Heart right ventricle (tissue), 16 donors: ENCODE measurements at regions of chr2 and their contacts with region 1.

Region 1: GRCh38 chr2:119223521-119224390 is at the start of gene STEAP3:
- DNase-seq: peak; percentile 75 to 86
- ATAC-seq: peak; percentile 86 to 96 (median 94)
- H3K4me3 ChIP-seq: peak within 1 kb of the TSS; percentile 47 to 89 (median 72)
- H3K27ac ChIP-seq: peak within 1 kb of the TSS in 7 of 10 donors; percentile 32 to 70 (median 45)
- H3K4me1 ChIP-seq: peaks cover 10 to 28% (median 12%) of the 10 kb centered on the region in 9 donors
- H3K27me3 ChIP-seq: peaks cover 0 to 9% (median 0%) of the 10 kb centered on the region in 7 donors
- CTCF ChIP-seq: no peak
- total RNA-seq, gene STEAP3: 5.0 to 18.2 (median 8.6) TPM

Region 2: DNA sequence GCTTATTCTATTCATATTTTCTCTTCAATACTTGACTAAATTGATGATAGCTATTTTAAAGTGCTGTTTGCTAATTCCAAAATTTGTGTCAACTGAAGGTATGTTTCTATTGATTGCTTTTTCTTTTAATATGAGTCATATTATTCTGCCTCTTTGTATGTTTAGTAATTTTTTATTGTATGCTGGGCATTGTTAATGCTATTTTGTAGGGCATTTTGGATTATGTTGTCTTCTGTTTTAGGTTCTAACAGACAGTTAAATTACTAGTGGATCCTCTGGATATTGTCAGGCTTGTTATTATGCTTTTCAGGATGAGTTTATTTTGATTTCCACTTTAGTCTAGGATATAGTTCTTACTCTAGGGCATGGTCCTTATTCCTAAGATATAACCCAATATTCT is 120.8 kb before region 1 on chr2:
- intact Hi-C with region 1: no loop called
- DNase-seq: no peak
- ATAC-seq: no peak
- H3K4me3 ChIP-seq: no peak overlapping the region
- H3K27ac ChIP-seq: no peak overlapping the region
- H3K4me1 ChIP-seq: no peaks in the 10 kb centered on the region
- H3K27me3 ChIP-seq: peaks cover 0 to 4% (median 0%) of the 10 kb centered on the region in 7 donors
- CTCF ChIP-seq: no peak

Region 3: DNA sequence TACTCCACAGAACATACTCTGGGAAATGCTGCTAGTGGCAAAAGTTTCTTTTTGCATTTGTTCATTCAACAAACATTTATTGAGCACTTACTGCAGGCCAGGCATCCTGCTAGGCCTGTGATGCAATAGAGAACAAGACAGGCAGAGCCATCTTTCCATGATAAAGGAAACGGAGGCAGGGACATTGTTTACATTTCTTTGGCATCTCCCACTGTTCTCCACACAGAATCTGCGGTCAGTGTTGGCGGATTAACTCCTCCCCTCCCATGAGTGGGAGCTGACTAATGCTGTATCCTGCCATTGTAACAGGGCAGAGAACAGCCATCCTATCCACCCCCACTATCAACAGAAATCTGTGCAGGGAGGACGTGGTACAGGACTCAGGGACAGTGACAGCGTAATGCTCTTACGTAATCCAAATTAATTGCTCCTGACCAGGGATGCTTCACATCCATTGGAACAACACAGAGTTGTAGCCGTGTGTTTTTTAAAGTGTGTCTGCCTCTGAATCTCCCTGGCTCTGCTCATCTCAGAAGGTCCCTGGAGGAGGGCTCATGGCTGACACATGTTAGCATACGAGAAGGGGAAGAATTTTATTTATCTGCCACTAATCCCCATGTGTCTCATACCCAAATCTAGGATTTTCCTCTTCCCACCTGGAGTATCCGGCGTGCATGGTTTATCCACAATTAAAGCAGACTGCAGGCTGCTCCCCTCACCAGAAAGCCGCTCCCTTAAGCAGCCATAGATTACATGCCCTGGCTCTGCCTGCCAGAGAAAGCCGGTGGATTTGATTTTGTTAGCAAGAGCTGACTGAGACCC is 32.2 kb after region 1 on chr2:
- intact Hi-C with region 1: loop called in 2 of 10 experiments (anchors 5 kb)
- DNase-seq: no peak
- ATAC-seq: peak in 5 of 8 donors; percentile 45 to 75 (median 68)
- H3K4me3 ChIP-seq: no peak overlapping the region
- H3K27ac ChIP-seq: no peak overlapping the region
- H3K4me1 ChIP-seq: peaks cover 0 to 21% (median 0%) of the 10 kb centered on the region in 9 donors
- H3K27me3 ChIP-seq: no peaks in the 10 kb centered on the region
- CTCF ChIP-seq: no peak

Region 4: GRCh38 chr2:119264781-119265692 is 41.3 kb after region 1 on chr2:
- intact Hi-C with region 1: loop called in 2 of 10 experiments (anchors 2 to 5 kb)
- DNase-seq: peak in 1 of 2 donors; percentile 23
- ATAC-seq: peak; percentile 71 to 89 (median 83)
- H3K4me3 ChIP-seq: no peak overlapping the region
- H3K27ac ChIP-seq: no peak overlapping the region
- H3K4me1 ChIP-seq: peaks cover 0 to 13% (median 0%) of the 10 kb centered on the region in 9 donors
- H3K27me3 ChIP-seq: no peaks in the 10 kb centered on the region
- CTCF ChIP-seq: peak; percentile 33 to 76 (median 72)

Region 5: GRCh38 chr2:119283860-119284331 is 60.1 kb after region 1 on chr2:
- intact Hi-C with region 1: loop called in 1 of 10 experiments (anchors 10 kb)
- DNase-seq: peak; percentile 46 to 60
- ATAC-seq: peak; percentile 77 to 91 (median 84)
- H3K4me3 ChIP-seq: no peak overlapping the region
- H3K27ac ChIP-seq: peak overlapping the region in 6 of 10 donors; percentile 9 to 80 (median 23)
- H3K4me1 ChIP-seq: peaks cover 0 to 28% (median 3%) of the 10 kb centered on the region in 9 donors
- H3K27me3 ChIP-seq: no peaks in the 10 kb centered on the region
- CTCF ChIP-seq: no peak

Region 6: GRCh38 chr2:119290859-119291587 is 67.3 kb after region 1 on chr2:
- intact Hi-C with region 1: loop called in 5 of 10 experiments (anchors 1 to 10 kb)
- DNase-seq: peak; percentile 78 to 86
- ATAC-seq: peak; percentile 60 to 90 (median 86)
- H3K4me3 ChIP-seq: no peak overlapping the region
- H3K27ac ChIP-seq: no peak overlapping the region
- H3K4me1 ChIP-seq: peaks cover 0 to 18% (median 3%) of the 10 kb centered on the region in 9 donors
- H3K27me3 ChIP-seq: no peaks in the 10 kb centered on the region
- CTCF ChIP-seq: peak; percentile 19 to 99 (median 91)

Region 7: DNA sequence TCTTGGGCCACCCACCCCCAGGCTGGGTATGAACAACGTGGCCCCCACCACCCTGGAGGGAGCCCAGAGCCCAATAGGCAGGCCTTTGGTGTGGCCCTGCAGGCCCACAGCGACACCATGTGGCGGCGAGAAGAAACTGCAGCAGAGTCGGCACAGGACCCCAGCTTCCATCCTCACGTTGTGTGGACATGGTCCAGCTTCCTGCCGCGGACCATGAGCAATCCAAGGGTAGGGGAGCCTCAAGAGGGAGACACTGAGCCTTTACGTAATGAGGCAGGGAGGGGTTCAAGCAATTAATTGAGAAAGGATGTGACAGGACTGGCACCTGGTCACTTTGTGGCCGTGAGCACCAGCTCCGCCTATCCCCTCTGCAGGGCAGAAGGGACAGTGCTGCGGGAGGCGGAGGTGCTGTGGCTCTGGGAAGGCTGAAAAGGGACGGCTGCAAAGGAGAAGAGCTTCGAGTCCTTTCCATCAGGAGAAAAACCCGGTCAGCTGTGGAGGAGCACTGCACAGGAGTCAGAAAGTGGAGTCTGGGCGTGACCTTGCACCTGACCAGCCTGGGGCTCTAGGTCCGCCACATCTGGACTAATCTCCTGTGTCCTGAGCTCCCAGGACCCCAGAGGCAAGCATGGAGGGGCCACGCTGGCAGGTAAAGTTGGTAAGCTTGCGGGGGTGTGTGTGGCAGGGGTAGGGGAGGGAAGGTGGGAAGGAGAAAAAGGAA is 252.7 kb after region 1 on chr2:
- intact Hi-C with region 1: loop called in 3 of 10 experiments (anchors 10 kb)
- DNase-seq: peak in 1 of 2 donors; percentile 52
- ATAC-seq: peak; percentile 57 to 78 (median 72)
- H3K4me3 ChIP-seq: peak overlapping the region in 2 of 10 donors; percentile 20
- H3K27ac ChIP-seq: peak overlapping the region in 5 of 10 donors; percentile 28 to 73 (median 44)
- H3K4me1 ChIP-seq: peaks cover 0 to 39% (median 18%) of the 10 kb centered on the region in 9 donors
- H3K27me3 ChIP-seq: peaks cover 0 to 6% (median 0%) of the 10 kb centered on the region in 7 donors
- CTCF ChIP-seq: peak; percentile 89 to 98 (median 96)